IMR-90 (cell line): ENCODE measurements at regions of chr2 and their contacts with region 1.

Region 1: GRCh38 chr2:189661148-189661956 is at the start of gene ASNSD1:
- DNase-seq: peak; percentile 100
- ATAC-seq: peak; percentile 95
- H3K4me3 ChIP-seq: peak within 1 kb of the TSS; percentile 80
- H3K27ac ChIP-seq: peak within 1 kb of the TSS; percentile 91
- H3K4me1 ChIP-seq: peaks cover 4% of the 10 kb centered on the region; the same call in 1 of the 2 replicates
- H3K27me3 ChIP-seq: no peaks in the 10 kb centered on the region; the same call in 1 of the 2 replicates
- CTCF ChIP-seq: peak; percentile 100; the same call in 1 of the 2 replicates
- POLR2A ChIP-seq: peak; percentile 89
- RAD21 ChIP-seq: peak; percentile 91
- total RNA-seq, gene ASNSD1: 35.7 and 67.5 TPM in 2 replicates

Region 2: GRCh38 chr2:189466660-189467059 is 194.7 kb before region 1 on chr2:
- CTCF ChIA-PET with region 1: interaction called, 3 read pairs
- POLR2A ChIA-PET with region 1: no interaction called
- dilution Hi-C with region 1: no loop called
- in situ Hi-C with region 1: no loop called
- intact Hi-C with region 1: loop called (anchors 2 kb)
- DNase-seq: peak; percentile 50
- ATAC-seq: peak; percentile 73
- H3K4me3 ChIP-seq: no peak overlapping the region
- H3K27ac ChIP-seq: no peak overlapping the region
- H3K4me1 ChIP-seq: no peaks in the 10 kb centered on the region
- H3K27me3 ChIP-seq: no peaks in the 10 kb centered on the region
- CTCF ChIP-seq: peak; percentile 61
- POLR2A ChIP-seq: no peak
- RAD21 ChIP-seq: peak; percentile 61

Region 3: DNA sequence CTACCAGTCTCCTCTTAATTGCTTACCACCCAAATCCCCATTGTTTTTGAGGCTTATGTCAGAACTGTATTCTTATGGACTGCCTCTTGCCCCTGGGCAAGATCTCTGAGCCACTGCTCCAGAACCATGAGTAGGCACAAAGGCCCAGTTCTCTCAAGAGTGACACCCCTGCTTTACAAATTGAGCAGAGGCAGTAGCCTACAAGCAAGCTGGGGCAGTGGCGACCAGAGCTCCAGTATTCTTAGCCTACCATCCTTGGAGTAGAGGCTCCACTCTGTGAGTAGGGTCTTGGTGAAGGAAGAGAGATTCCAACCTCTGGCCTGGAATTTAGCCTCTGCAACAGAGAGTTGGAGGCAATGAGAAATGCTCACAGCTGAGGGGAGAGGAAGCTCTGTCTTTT is 183.6 kb before region 1 on chr2:
- CTCF ChIA-PET with region 1: no interaction called
- POLR2A ChIA-PET with region 1: no interaction called
- dilution Hi-C with region 1: no loop called
- in situ Hi-C with region 1: no loop called
- intact Hi-C with region 1: no loop called
- DNase-seq: no peak
- ATAC-seq: no peak
- H3K4me3 ChIP-seq: no peak overlapping the region
- H3K27ac ChIP-seq: no peak overlapping the region
- H3K4me1 ChIP-seq: no peaks in the 10 kb centered on the region
- H3K27me3 ChIP-seq: no peaks in the 10 kb centered on the region
- CTCF ChIP-seq: no peak
- POLR2A ChIP-seq: no peak
- RAD21 ChIP-seq: no peak

Region 4: DNA sequence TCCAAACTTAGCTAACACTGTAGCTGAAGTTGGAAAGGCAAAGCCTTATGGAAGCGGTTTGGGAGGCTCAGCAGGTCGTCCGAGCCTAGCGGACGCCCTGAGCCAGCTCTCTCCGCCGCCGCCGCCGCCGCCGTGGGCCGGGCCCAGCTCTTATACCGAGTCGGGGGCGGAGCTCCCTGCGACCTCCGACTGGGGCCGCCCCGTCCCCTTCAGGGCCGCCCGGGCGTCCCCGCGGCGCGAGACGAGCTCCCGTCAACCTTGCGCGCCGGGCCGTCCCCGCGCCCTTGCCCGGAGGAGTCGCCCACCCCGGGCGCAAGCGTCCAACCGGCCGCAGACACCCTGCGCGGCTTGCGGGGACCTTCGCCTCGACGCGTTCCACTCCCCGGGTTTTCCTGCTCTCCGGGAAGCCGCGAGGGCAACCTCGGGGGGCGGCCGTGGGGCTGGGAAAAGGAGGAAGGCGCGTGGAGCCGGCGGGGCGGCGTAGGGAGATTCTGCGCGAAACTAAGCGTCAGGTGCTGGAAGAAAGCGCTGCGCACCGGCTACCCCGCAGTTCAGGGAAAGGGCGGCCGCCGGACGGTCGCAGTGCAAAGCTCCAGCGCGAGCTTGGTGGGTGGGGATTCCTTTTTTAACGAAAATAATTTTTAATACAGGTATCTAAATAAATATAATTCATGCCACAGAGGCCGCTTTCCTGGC is 80.5 kb before region 1 on chr2 and contains the start of gene SLC40A1:
- CTCF ChIA-PET with region 1: interaction called, 4 read pairs
- POLR2A ChIA-PET with region 1: no interaction called
- dilution Hi-C with region 1: no loop called
- in situ Hi-C with region 1: no loop called
- intact Hi-C with region 1: loop called (anchors 5 kb)
- DNase-seq: peak; percentile 36
- ATAC-seq: peak; percentile 98
- H3K4me3 ChIP-seq: peak within 1 kb of the TSS; percentile 73
- H3K27ac ChIP-seq: peak within 1 kb of the TSS; percentile 30
- H3K4me1 ChIP-seq: peaks cover 2% of the 10 kb centered on the region; the same call in 1 of the 2 replicates
- H3K27me3 ChIP-seq: peaks cover 2% of the 10 kb centered on the region; the same call in 1 of the 2 replicates
- CTCF ChIP-seq: no peak
- POLR2A ChIP-seq: no peak
- RAD21 ChIP-seq: no peak
- total RNA-seq, gene SLC40A1: 3.9 and 5.0 TPM in 2 replicates

Region 5: DNA sequence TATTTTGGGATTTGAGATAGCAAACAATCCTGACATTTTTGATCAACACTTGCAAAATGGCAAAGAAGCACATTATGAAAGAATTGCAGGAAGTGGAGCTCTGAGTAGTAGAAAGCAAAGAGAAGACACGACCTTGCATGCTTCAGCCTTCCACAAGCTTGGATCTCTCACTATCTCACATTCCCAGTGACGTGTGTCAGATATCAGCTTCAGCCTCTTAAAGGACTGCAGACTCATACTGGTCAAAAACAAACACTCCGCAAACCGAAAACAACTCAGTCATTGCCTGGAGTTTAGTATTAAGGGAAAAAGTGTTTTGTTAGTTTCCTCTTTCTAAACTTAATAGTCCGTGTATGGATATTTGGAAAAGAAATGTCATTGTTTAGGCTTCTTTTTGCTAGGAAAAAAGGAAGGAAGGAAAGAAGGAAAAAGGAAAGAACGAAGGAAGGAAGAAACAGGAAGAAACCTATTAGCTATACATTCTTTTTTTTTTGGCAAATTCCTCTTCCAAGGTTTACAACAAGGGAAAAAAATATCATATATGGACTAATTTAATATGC is 48.2 kb before region 1 on chr2:
- CTCF ChIA-PET with region 1: interaction called, 3 read pairs
- POLR2A ChIA-PET with region 1: no interaction called
- dilution Hi-C with region 1: no loop called
- in situ Hi-C with region 1: no loop called
- intact Hi-C with region 1: loop called (anchors 1 kb)
- DNase-seq: peak; percentile 98
- ATAC-seq: peak; percentile 94
- H3K4me3 ChIP-seq: peak overlapping the region; percentile 12; the same call in 1 of the 2 replicates
- H3K27ac ChIP-seq: peak overlapping the region; percentile 71; the same call in 1 of the 2 replicates
- H3K4me1 ChIP-seq: peaks cover 15% of the 10 kb centered on the region
- H3K27me3 ChIP-seq: no peaks in the 10 kb centered on the region
- CTCF ChIP-seq: no peak
- POLR2A ChIP-seq: no peak
- RAD21 ChIP-seq: no peak

Region 6: DNA sequence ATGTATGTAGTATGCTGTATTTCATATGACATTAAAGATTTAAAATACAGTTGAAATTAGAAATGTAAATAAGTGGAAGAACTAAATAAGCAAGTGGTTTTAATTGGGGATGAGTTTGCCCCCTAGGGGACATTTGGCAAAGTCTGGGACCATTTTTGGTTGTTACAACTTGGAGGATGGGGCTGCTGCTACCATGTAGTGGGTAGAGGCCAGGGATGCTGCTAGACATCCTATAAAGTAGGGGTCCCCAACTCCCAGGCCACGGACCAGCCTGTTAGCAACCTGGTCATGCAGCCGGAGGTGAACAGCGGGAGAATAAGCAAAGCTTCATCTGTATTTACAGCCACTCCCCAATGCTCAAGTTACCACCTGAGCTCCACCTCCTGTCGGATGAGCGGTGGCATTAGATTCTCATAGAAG is 27.9 kb before region 1 on chr2:
- CTCF ChIA-PET with region 1: no interaction called
- POLR2A ChIA-PET with region 1: no interaction called
- dilution Hi-C with region 1: no loop called
- in situ Hi-C with region 1: no loop called
- intact Hi-C with region 1: no loop called
- DNase-seq: no peak
- ATAC-seq: no peak
- H3K4me3 ChIP-seq: no peak overlapping the region
- H3K27ac ChIP-seq: no peak overlapping the region
- H3K4me1 ChIP-seq: peaks cover 8% of the 10 kb centered on the region
- H3K27me3 ChIP-seq: no peaks in the 10 kb centered on the region
- CTCF ChIP-seq: peak; percentile 41
- POLR2A ChIP-seq: no peak
- RAD21 ChIP-seq: peak; percentile 27; the same call in 1 of the 2 replicates

Region 7: DNA sequence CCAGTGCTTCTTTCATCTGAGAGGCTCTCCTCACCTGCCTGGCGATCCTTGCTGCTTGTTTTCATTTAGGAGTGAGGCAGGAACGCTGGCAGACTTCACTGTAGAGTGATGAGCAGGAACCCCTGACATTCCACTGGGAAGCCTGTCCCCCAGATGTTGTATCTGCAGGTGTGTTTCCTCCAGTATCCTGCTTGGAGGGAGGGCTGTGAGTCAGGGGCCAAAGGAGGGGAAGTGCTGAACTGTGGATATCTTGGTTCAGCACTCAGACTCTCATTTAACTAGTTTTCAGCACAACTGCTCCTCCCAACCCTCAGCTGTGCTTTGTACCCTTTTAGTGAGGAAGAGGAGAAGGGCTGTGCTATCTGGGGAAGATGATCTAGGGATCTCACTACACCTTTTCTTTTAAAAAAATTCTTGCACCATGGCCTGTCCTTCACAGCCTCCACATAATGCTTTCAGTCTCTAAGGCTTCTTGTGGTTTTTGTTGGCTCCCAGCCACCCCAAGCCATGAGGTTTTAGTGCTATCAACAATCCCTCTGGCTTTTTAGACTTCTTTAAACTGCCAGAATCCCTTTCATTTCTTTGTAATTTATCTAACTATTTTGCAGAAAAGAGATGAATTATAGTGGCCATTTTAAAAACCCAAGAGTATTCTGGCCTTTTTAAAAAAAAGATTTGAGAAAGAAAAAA is 24.3 kb after region 1 on chr2:
- CTCF ChIA-PET with region 1: no interaction called
- POLR2A ChIA-PET with region 1: no interaction called
- dilution Hi-C with region 1: no loop called
- in situ Hi-C with region 1: no loop called
- intact Hi-C with region 1: no loop called
- DNase-seq: peak; percentile 78
- ATAC-seq: peak; percentile 86
- H3K4me3 ChIP-seq: no peak overlapping the region
- H3K27ac ChIP-seq: no peak overlapping the region
- H3K4me1 ChIP-seq: peaks cover 7% of the 10 kb centered on the region; the same call in 1 of the 2 replicates
- H3K27me3 ChIP-seq: no peaks in the 10 kb centered on the region
- CTCF ChIP-seq: no peak
- POLR2A ChIP-seq: no peak
- RAD21 ChIP-seq: no peak

Region 8: GRCh38 chr2:189698020-189698887 is 36.9 kb after region 1 on chr2:
- CTCF ChIA-PET with region 1: interaction called, 6 read pairs
- POLR2A ChIA-PET with region 1: no interaction called
- dilution Hi-C with region 1: no loop called
- in situ Hi-C with region 1: no loop called
- intact Hi-C with region 1: loop called (anchors 2 kb)
- DNase-seq: peak; percentile 48
- ATAC-seq: peak; percentile 57
- H3K4me3 ChIP-seq: no peak overlapping the region
- H3K27ac ChIP-seq: no peak overlapping the region
- H3K4me1 ChIP-seq: no peaks in the 10 kb centered on the region
- H3K27me3 ChIP-seq: no peaks in the 10 kb centered on the region
- CTCF ChIP-seq: peak; percentile 53
- POLR2A ChIP-seq: no peak
- RAD21 ChIP-seq: peak; percentile 31

Region 9: DNA sequence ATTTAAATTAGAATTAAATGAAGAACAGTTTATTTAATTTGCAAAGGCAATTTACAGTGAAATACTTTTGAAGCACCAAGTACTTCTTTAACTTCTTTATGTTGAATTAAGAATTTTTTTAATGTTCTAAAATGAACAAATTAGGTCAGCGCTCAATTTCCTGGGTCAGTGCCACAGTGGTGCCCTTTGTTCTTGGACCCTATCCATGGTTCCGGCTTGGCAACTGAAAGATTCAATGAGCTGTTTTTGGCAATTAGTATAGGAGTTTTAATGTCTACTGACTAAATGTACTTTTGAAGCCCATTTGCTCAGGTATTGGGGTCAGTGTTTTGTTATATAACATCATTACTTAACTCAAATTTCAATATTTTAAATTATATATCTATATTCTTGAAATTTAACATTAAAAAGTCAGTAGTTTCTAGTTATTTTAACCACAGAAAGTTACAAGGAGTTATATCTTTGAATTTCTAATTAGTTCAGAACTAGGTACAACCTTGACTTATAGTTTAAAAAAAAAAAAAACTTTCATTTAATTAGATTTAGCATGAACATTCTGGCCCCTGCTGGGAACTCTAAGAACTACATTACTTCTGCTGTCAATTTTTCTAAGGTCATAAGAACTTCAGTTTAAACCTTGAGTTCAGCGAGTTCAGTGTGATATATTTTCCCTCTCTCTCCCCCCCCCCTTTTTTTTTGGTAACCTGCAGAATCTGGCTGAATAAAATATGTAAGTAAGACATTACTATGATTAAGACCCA is 408.8 kb after region 1 on chr2:
- CTCF ChIA-PET with region 1: no interaction called
- POLR2A ChIA-PET with region 1: no interaction called
- dilution Hi-C with region 1: no loop called
- in situ Hi-C with region 1: no loop called
- intact Hi-C with region 1: loop called (anchors 5 kb)
- DNase-seq: peak; percentile 75
- ATAC-seq: peak; percentile 69
- H3K4me3 ChIP-seq: no peak overlapping the region
- H3K27ac ChIP-seq: no peak overlapping the region
- H3K4me1 ChIP-seq: no peaks in the 10 kb centered on the region
- H3K27me3 ChIP-seq: no peaks in the 10 kb centered on the region
- CTCF ChIP-seq: peak; percentile 81
- POLR2A ChIP-seq: no peak
- RAD21 ChIP-seq: peak; percentile 81